ENCODE measurements at regions of chr9 and their contacts with region 1.

Region 1: GRCh38 chr9:73081979-73082657 is 69.5 kb upstream of the ANXA1 start:
- DNase-seq: no peak

Region 2: GRCh38 chr9:72364679-72365524 is 717.2 kb before region 1 on chr9 and contains the start of gene ZFAND5:
- intact Hi-C with region 1: loop called in 1 of 2 experiments (anchors 10 kb)
- DNase-seq: peak; percentile 100
- total RNA-seq, gene ZFAND5: 141 to 175 TPM

Region 3: DNA sequence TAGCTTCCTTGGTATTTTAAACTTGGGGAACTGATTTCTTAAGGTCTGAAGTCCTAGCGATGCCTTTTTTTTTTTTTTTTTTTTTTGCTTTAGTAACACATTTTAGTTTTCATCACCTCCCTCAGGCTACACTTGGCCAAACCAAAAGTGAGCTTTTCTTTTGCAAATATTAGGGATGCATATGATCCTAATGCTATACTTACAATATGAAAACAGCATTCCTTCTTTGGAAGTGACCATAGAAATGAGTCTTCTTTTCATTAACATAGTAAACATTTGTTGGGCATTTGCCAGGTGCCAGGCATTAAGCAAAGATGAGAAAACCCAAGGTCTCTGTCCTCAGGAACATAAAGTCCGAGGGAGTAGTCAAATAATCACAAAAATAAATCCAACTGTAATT is 319.1 kb before region 1 on chr9:
- intact Hi-C with region 1: no loop called
- DNase-seq: no peak

Region 4: DNA sequence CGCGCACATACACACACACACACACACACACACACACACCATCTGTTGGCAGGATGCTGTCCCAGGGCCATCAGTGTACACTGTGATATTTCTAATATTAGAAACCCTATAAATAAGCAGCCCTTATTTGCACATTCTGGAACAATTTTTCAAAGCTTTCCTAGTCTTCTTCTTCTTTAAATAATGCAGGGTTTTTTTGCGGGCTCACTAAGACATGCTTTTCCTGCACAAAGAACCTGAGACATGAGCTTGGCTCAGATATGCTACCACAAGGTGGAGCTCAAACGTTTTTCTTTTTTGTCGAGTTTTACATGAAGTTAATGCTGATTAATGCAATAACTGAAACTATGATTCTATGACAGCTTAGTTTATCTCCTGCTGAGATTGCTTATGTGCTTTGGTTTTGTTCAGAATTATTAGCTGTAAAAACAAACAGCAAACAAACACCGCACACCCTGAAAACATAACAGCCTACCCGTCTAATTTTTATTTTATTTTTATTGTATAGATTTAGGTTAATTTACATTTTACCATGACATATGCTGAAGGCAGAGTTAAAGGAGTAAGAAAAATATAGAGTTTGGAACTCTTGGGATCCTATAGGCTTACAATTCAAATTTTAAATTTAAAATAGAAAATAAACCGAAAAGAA is 225.0 kb before region 1 on chr9:
- intact Hi-C with region 1: loop called in 1 of 2 experiments (anchors 5 kb)
- DNase-seq: no peak

Region 5: DNA sequence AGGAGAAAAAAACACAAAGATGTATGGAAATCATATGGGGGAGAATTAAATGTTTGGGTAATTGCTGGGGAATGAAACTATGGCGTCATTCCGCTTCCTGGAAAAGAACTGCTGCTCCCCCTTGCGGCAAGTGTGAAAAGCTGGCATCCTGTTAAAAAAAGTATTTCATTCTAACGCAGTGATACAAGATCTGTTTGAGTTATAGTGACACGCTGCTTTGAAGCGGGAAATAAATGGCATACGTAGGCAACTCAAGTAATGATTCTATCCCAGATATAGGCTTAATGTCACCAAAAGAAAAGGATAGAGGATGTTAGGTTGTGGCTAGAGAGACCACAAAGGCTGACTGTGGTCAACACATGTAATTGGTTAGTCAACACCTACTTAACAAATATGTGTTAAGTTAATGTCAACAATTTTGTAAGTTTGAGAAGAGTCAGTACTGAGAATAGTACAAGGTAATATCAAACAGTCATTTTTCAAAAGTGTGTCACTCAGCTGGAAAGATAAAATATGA is 59.0 kb before region 1 on chr9:
- intact Hi-C with region 1: loop called in 1 of 2 experiments (anchors 10 kb)
- DNase-seq: no peak

Region 6: GRCh38 chr9:73067074-73067473 is 15.0 kb before region 1 on chr9:
- intact Hi-C with region 1: no loop called
- DNase-seq: no peak

Measured in posterior vena cava (tissue), 2 donors.